Right ventricle myocardium inferior (tissue), 1 donor: ENCODE measurements at regions of chr1 and their contacts with region 1.

Region 1: DNA sequence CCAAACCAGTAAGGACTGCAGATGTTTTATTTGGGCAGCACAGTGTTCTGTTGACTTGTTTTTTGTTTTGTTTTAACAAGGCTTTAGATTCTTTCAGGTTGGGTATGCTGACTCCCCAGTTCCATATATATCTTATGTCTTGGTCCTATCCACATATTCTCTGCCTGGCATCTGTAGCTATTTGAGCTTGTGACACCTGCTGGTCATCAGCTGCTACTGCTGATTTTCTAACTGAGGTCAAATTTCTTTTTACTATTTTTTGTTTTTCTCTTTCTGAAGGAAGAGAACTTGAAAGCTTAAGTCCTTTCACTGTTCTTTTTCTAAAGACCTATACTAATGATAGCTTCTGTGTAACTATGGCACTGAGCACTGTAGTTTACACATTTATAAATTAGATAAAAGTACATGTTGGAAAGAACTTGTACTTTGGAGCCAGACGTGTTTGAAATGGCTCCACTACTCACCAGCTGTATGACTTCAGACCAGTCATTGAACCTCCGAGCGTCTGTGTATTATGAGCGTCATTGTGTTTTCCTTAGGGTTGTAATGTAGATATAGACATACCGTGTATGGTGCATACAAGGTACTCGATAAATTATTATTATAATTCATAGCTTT is 109.4 kb downstream of the NRDC start:
- DNase-seq: no peak
- ATAC-seq: peak; percentile 81

Region 2: DNA sequence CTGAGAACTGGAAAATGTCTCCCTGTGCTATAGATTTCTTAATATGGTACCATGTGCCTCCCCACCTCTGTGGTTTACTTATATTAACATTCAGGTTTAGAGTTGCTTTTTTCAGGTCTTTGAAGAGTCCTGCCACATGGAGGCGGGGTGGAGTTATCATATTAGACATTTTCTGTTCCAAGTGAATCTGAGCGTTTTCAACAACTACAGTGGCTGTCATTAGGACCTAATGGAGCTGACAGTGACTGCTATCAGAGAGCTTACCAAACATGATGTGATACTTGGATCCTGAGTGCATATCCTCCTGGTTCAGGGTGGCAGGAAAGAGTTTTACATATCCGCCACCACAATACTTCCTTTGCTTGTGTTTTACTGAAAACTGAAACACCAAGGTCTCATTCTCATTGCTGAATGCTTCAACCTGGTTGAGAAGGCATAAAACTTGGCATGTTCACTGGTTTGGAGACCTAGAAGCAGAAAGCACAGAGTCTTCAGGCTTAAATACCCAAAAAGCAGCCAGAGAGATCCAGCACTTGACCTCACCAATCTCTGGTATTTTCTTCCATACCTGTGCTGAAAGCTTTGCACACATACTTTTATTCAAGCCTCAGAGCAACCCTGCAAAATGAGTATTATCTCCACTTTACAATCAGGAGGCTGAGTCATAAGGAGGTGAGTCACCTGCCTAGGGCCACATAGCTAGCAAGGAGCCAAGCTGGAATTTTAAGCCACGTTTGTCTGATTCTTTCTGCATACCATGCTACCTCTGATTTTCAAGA is 199.6 kb before region 1 on chr1:
- intact Hi-C with region 1: loop called (anchors 5 kb)
- DNase-seq: no peak
- ATAC-seq: peak; percentile 40

Region 3: GRCh38 chr1:51616901-51617708 is 152.0 kb before region 1 on chr1 and contains the start of gene OSBPL9:
- intact Hi-C with region 1: loop called (anchors 2 kb)
- DNase-seq: peak; percentile 95
- ATAC-seq: peak; percentile 91
- total RNA-seq, gene OSBPL9: 45.1 TPM

Region 4: DNA sequence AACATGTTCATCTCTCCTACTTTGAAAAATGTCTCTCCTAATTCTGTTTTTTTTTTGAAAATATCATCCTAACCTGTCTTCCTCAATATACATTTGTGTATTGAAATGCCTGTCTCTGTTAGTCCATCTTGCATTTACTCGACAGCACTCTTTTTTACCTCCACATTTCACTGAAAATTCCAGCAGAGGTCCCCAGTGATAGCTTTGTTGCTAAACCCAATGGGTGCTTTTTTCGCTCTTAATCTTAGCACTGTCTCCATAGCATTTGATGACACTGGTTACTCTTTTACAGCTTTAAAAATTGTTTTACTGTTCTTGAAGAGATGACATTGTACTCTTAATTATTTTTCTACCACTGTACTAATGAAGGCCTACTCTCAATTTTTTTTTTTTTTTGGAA is 141.4 kb before region 1 on chr1:
- intact Hi-C with region 1: loop called (anchors 2 kb)
- DNase-seq: no peak
- ATAC-seq: peak; percentile 33